Upper lobe of right lung (tissue), 1 donor: ENCODE measurements at regions of chr9 and their contacts with region 1.

Region 1: GRCh38 chr9:82613498-82613897 is 449.4 kb downstream of the RASEF start:
- DNase-seq: no peak
- ATAC-seq: no peak
- H3K4me3 ChIP-seq: no peak overlapping the region
- H3K27ac ChIP-seq: no peak overlapping the region
- H3K4me1 ChIP-seq: no peaks in the 10 kb centered on the region
- H3K27me3 ChIP-seq: no peaks in the 10 kb centered on the region
- CTCF ChIP-seq: no peak

Region 2: GRCh38 chr9:82570226-82570625 is 43.3 kb before region 1 on chr9:
- intact Hi-C with region 1: no loop called
- DNase-seq: no peak
- ATAC-seq: no peak
- H3K4me3 ChIP-seq: no peak overlapping the region
- H3K27ac ChIP-seq: no peak overlapping the region
- H3K4me1 ChIP-seq: no peaks in the 10 kb centered on the region
- H3K27me3 ChIP-seq: no peaks in the 10 kb centered on the region
- CTCF ChIP-seq: no peak

Region 3: DNA sequence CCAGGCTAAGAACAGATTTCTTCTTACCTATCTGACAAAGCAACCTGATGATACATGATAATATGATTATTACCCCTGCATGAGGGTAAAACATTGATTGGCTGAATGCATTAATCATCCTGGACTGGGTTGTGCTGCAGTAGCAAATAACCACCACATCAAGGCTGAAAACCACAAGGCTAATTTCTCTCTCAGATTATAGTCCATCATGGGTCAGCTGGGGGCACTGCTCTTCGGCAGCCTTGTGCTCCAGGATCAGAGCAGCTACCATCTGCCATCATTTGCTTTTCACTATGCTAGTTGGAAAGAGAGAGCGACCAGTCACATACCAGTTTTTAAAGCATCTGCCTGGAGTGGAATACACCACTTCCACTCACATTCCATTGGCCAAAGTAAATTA is 66.0 kb after region 1 on chr9:
- intact Hi-C with region 1: loop called (anchors 10 kb)
- DNase-seq: no peak
- ATAC-seq: no peak
- H3K4me3 ChIP-seq: no peak overlapping the region
- H3K27ac ChIP-seq: no peak overlapping the region
- H3K4me1 ChIP-seq: no peaks in the 10 kb centered on the region
- H3K27me3 ChIP-seq: no peaks in the 10 kb centered on the region
- CTCF ChIP-seq: no peak